ENCODE measurements at regions of chr20 and their contacts with region 1.

Region 1: DNA sequence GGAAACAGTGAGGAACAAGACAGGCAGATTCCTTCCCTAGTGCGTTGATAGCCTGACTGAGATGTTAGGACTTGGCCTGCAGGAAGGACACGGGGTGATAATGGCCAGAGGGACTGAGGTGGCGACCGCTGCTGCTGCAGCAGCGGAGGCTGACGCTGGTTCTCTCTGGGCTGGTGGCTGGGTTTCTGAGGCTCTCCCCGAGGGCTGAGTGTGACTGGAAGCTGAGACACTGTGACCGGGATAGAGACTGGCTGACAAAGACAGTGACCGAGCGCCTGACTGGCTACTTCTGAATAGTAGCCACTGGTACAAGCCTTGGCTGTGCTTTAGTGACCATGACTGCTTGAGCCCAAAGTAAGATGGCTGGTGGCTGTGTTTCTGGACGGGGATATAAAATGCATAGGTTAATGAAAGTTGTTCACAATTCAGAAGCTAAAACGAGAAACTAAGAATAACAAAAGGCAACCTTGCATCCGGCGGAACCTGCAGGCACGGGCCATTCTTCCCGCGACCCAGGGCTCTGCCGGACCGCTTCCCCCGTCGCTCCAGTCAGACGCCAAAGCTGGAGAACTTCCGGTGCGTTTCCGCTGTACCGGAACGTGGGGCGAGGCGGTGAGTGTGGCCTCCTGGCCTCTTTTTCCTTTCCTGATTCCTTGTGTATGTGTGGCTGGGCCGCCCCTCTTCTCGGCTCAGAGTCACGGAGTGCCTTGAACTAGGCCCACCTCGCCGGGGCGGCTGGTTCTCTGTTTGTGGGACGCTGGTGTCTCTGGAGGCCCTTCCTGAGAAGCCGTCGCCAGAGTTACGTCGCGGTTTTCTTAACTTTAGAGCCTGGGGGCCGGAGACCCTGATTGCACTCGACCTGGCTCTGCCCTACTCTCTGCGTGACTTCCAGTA is at the start of gene AAR2:
- DNase-seq: peak; percentile 78
- ATAC-seq: peak; percentile 91
- H3K4me3 ChIP-seq: peak within 1 kb of the TSS; percentile 78 to 89 (median 88)
- H3K4me3 Mint-ChIP-seq: peak within 1 kb of the TSS; percentile 94
- H3K27ac ChIP-seq: peak within 1 kb of the TSS; percentile 54 to 91
- H3K27ac Mint-ChIP-seq: peak within 1 kb of the TSS; percentile 90
- H3K4me1 ChIP-seq: peaks cover 10 to 16% of the 10 kb centered on the region in 2 donors
- H3K4me1 Mint-ChIP-seq: peaks cover 35% of the 10 kb centered on the region
- H3K27me3 ChIP-seq: peaks cover 0 to 6% (median 0%) of the 10 kb centered on the region in 4 experiments
- H3K27me3 Mint-ChIP-seq: peaks cover 12% of the 10 kb centered on the region
- CTCF ChIP-seq: no peak
- total RNA-seq, gene AAR2: 21.3 and 22.0 TPM in 2 replicates

Region 2: DNA sequence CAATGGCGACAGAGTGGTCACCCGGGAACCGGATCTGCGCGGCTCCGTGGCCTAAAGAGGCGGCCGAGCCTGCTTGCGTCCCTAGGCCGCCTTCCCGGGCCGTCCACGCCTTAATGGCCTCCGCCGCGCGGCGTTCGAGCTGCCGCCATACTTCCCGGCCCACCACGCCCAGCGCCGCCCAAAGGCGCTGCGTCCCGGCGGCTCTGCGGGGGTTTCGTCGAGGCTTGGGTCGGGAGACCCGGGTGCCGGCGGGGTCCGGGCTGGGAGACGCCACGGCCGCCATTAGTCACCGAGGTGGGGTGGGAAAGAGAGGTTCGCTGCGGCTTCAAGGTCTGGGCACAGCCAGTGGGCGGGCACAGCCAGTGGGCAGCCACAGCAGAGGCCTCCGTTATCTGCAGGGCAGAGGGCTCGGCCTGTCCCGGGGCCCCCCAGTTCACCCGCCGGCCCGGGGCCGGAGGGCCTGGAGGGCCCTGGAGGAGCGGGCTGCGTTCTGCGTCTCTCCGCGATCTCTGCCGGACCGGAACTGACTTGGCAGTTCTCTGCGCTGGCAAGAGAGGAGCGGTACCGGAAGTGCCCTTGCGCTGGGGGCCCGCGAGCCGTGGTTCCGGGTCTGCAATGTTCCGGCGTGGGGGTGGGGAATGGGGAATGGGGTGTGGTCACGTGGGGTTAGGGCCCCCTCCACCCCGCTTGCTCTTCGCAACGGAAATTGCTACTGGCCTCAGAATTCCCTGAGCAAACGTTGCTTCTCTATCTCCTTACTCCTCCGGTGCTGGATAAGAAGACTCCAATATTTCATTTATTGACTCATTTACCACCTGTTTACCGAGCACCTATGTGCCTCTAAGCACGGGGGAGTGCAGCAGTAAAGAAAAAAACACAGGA is 185.5 kb before region 1 on chr20:
- CTCF ChIA-PET with region 1: no interaction called
- POLR2A ChIA-PET with region 1: no interaction called
- intact Hi-C with region 1: loop called (anchors 10 kb)
- DNase-seq: peak; percentile 88
- ATAC-seq: peak; percentile 93
- H3K4me3 ChIP-seq: peak overlapping the region; percentile 68 to 99 (median 96)
- H3K4me3 Mint-ChIP-seq: peak overlapping the region; percentile 93
- H3K27ac ChIP-seq: peak overlapping the region; percentile 91 to 95
- H3K27ac Mint-ChIP-seq: peak overlapping the region; percentile 94
- H3K4me1 ChIP-seq: peaks cover 11 to 12% of the 10 kb centered on the region in 2 donors
- H3K4me1 Mint-ChIP-seq: peaks cover 45% of the 10 kb centered on the region
- H3K27me3 ChIP-seq: no peaks in the 10 kb centered on the region
- H3K27me3 Mint-ChIP-seq: peaks cover 11% of the 10 kb centered on the region
- CTCF ChIP-seq: no peak